Activated CD4-positive, alpha-beta T cell treated with anti-CD3 and anti-CD28 coated beads, Interleukin-2, amount 10 ng/mL, durations not matched to agents 24 days and 14 days (primary cell): ENCODE measurements at regions of chr19 and their contacts with region 1.

Region 1: GRCh38 chr19:19554074-19555023 is 16.3 kb downstream of the CILP2 start:
- DNase-seq: peak; percentile 87
- H3K4me3 Mint-ChIP-seq: no peak overlapping the region
- H3K27ac Mint-ChIP-seq: no peak overlapping the region
- H3K4me1 Mint-ChIP-seq: peaks cover 5% of the 10 kb centered on the region
- H3K27me3 Mint-ChIP-seq: no peaks in the 10 kb centered on the region

Region 2: DNA sequence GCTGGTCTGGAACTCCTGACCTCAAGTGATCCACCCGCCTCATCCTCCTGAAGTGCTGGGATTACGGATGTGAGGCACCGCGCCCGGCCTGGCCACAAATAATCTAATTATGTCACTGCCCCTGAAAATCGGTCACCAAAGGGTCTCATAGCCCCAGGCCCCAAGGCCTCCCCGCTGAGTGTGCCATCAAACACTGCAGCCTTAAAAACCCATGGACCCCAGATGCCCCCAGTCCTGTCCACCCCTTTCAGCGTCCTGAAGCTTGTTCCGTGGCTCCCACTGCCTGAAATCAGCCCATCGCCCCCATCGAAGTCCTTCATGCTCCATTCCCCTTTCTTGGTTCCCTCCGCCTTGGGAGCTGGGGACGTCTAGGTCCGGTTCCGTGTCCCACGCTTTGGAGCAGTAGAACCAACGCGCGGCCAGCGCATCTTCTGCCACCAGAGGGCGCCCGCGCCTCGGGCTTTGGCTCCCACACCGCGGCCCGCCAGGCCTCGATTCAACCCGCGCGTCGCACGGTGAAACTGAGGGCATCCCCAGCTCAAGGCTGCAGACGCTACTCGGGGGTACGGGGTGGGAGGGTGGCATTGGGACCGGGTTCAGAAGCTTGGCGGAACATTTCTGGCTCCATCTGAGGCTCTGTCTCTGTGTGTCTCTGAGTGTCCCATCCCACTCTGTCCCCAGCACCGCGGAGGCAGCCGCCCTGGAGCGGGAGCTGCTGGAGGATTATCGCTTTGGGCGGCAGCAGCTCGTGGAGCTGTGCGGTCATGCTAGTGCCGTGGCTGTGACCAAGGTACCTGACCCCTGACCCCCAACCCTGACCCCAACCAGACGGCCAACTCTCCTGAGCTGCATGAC is 22.2 kb before region 1 on chr19:
- intact Hi-C with region 1: loop called (anchors 1 kb)
- DNase-seq: peak; percentile 96
- H3K4me3 Mint-ChIP-seq: peak overlapping the region; percentile 14
- H3K27ac Mint-ChIP-seq: peak overlapping the region; percentile 47
- H3K4me1 Mint-ChIP-seq: peaks cover 16% of the 10 kb centered on the region
- H3K27me3 Mint-ChIP-seq: peaks cover 3% of the 10 kb centered on the region

Region 3: GRCh38 chr19:19591133-19591825 is 36.9 kb after region 1 on chr19:
- intact Hi-C with region 1: loop called (anchors 5 kb)
- DNase-seq: peak; percentile 92
- H3K4me3 Mint-ChIP-seq: peak overlapping the region; percentile 75
- H3K27ac Mint-ChIP-seq: peak overlapping the region; percentile 94
- H3K4me1 Mint-ChIP-seq: peaks cover 60% of the 10 kb centered on the region
- H3K27me3 Mint-ChIP-seq: no peaks in the 10 kb centered on the region